ENCODE measurements at regions of chr14 and their contacts with region 1.

Region 1: DNA sequence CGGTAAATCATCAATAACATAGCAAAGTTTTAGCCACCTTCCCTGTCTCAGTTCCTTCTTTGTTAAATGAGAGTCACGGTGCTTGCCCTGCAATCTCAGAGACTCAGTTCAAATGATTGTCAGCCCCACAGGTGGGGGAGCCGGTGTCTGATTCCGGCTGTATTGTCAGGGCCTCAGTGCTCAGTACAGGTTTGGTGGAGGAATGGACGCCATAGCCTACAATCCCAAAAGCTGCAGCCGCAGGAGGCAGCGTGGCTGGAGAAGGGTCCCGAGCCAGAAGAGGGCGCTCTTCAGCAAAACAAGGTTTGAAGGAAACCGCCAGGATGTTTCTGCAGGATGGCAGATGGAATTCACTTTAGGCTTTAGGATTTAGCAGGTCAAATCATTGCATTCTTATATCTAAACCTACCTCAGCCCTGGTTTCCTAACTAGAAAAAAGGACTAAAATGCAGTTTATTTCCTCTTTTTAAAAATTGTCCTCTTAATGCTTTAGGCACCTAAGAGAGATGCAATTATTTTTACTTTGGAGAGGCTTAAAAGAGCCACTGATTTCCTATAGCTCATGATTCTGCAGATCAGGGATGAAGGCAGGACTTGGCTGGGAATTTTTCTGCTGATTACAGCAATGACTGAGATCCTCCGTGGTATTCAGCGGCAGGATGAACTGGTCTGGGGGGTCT is 29.2 kb downstream of the FOS start:
- DNase-seq: peak; percentile 53
- ATAC-seq: peak; percentile 53
- H3K4me3 Mint-ChIP-seq: no peak overlapping the region
- H3K27ac Mint-ChIP-seq: no peak overlapping the region
- H3K4me1 Mint-ChIP-seq: peaks cover 21% of the 10 kb centered on the region
- H3K27me3 Mint-ChIP-seq: no peaks in the 10 kb centered on the region
- CTCF ChIP-seq: peak; percentile 73

Region 2: GRCh38 chr14:74860906-74861733 is 446.7 kb before region 1 on chr14:
- CTCF ChIA-PET with region 1: interaction called, 4 read pairs
- POLR2A ChIA-PET with region 1: no interaction called
- intact Hi-C with region 1: loop called (anchors 1 kb)
- DNase-seq: peak; percentile 82
- ATAC-seq: peak; percentile 74
- H3K4me3 Mint-ChIP-seq: no peak overlapping the region
- H3K27ac Mint-ChIP-seq: no peak overlapping the region
- H3K4me1 Mint-ChIP-seq: peaks cover 6% of the 10 kb centered on the region
- H3K27me3 Mint-ChIP-seq: no peaks in the 10 kb centered on the region
- CTCF ChIP-seq: no peak

Region 3: DNA sequence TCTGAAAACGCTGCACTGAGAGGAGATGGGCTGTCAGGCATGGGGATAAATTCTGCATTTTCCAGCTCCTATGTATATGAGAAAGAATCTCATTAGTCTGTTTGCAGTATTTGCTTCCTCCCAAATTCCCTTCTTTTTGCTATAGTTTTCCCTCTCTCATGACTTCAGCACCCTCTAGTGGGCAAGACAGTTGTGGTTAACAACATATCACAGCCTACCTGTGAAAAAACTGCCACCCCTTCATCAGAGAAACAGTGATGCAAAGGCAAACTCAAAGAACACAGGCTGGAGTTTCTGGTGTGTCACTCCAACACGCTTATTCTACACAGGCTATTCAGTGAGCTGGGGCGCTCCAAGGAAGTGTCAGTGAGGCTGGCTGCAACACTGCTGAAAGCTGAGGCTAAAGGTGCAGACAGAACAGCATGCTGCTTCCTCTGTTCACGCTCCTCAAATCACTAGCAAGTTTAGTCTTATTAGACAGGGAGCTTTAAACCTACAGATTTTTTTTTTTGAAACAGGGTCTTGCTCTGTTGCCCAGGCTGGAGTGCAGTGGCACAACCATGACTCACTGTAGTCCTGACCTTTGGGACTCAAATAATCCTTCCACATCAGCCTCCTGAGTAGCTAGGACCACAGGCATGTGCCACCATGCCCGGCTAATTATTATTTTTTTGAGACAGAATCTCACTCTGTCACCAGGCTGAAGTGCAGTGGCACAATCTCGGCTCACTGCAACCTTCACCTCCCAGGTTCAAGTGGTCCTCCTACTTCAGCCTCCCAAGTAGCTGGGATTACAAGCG is 219.1 kb before region 1 on chr14:
- CTCF ChIA-PET with region 1: no interaction called
- POLR2A ChIA-PET with region 1: no interaction called
- intact Hi-C with region 1: loop called (anchors 1 kb)
- DNase-seq: no peak
- ATAC-seq: peak; percentile 37
- H3K4me3 Mint-ChIP-seq: no peak overlapping the region
- H3K27ac Mint-ChIP-seq: no peak overlapping the region
- H3K4me1 Mint-ChIP-seq: no peaks in the 10 kb centered on the region
- H3K27me3 Mint-ChIP-seq: no peaks in the 10 kb centered on the region
- CTCF ChIP-seq: peak; percentile 72

Region 4: GRCh38 chr14:75138492-75138891 is 169.3 kb before region 1 on chr14:
- CTCF ChIA-PET with region 1: interaction called, 47 read pairs
- POLR2A ChIA-PET with region 1: no interaction called
- intact Hi-C with region 1: no loop called
- DNase-seq: no peak
- ATAC-seq: peak; percentile 72
- H3K4me3 Mint-ChIP-seq: peak overlapping the region; percentile 55
- H3K27ac Mint-ChIP-seq: peak overlapping the region; percentile 76
- H3K4me1 Mint-ChIP-seq: peaks cover 51% of the 10 kb centered on the region
- H3K27me3 Mint-ChIP-seq: no peaks in the 10 kb centered on the region
- CTCF ChIP-seq: no peak

Region 5: DNA sequence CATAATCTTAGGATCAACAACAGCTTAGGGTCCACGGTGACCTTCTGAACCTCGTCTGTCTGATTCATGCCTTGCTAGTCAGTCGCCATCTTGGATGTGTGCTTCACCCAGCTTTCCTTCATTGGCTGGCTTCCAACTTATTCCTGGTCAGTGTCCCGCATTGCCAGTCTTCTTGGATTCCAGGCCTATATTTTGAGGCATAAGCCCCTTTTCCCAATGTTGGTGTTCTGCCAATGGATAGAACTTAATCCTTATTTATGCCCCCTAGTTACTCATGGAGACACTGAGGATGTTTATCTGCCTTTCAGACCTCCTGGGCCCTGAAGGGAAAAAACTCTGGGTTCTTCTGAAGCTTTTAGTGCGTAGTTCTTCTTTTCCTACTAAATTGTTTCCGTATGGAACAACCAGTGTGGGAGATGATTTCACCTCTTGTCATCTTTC is 125.8 kb after region 1 on chr14:
- CTCF ChIA-PET with region 1: no interaction called
- POLR2A ChIA-PET with region 1: no interaction called
- intact Hi-C with region 1: no loop called
- DNase-seq: no peak
- ATAC-seq: no peak
- H3K4me3 Mint-ChIP-seq: no peak overlapping the region
- H3K27ac Mint-ChIP-seq: no peak overlapping the region
- H3K4me1 Mint-ChIP-seq: peaks cover 47% of the 10 kb centered on the region
- H3K27me3 Mint-ChIP-seq: no peaks in the 10 kb centered on the region
- CTCF ChIP-seq: no peak

Region 6: GRCh38 chr14:75452900-75453747 is 145.3 kb after region 1 on chr14:
- CTCF ChIA-PET with region 1: interaction called, 10 read pairs
- POLR2A ChIA-PET with region 1: interaction called, 11 read pairs
- intact Hi-C with region 1: loop called (anchors 1 kb)
- DNase-seq: no peak
- ATAC-seq: no peak
- H3K4me3 Mint-ChIP-seq: no peak overlapping the region
- H3K27ac Mint-ChIP-seq: no peak overlapping the region
- H3K4me1 Mint-ChIP-seq: peaks cover 4% of the 10 kb centered on the region
- H3K27me3 Mint-ChIP-seq: no peaks in the 10 kb centered on the region
- CTCF ChIP-seq: no peak

Region 7: GRCh38 chr14:75560962-75561432 is 253.2 kb after region 1 on chr14:
- CTCF ChIA-PET with region 1: interaction called, 22 read pairs
- POLR2A ChIA-PET with region 1: no interaction called
- intact Hi-C with region 1: loop called (anchors 1 kb)
- DNase-seq: no peak
- ATAC-seq: peak; percentile 46
- H3K4me3 Mint-ChIP-seq: peak overlapping the region; percentile 42
- H3K27ac Mint-ChIP-seq: peak overlapping the region; percentile 41
- H3K4me1 Mint-ChIP-seq: peaks cover 37% of the 10 kb centered on the region
- H3K27me3 Mint-ChIP-seq: no peaks in the 10 kb centered on the region
- CTCF ChIP-seq: peak; percentile 40

Region 8: DNA sequence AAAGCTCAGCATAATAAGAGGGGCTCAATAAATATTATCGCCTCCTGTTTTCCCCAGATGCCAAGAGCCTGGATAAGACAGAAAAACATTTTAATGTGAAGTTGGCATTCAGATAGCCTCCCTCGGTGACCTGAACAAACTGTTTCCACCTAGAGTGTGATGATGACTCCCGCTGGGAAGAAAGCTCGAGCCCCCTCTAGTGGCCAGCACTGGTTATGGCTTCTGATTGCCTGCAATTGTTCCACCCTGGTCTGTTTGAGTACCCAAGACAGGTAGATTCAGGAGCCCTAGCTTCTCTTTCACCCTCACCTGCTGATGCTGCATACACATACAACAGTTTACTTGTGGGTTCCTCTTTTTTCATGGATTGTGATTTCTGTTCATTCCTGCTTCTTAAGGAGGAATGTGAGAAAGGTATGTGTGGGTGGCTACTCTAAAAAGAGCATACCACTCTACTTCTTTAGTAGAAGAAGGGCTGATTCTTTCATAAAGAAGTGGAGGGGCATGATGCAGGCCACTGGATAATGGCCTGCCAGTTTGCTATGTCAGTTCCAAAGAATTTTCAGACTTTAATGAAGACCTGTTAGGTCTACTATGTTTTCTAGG is 346.4 kb after region 1 on chr14:
- CTCF ChIA-PET with region 1: interaction called, 16 read pairs
- POLR2A ChIA-PET with region 1: no interaction called
- intact Hi-C with region 1: loop called (anchors 1 kb)
- DNase-seq: peak; percentile 72
- ATAC-seq: peak; percentile 96
- H3K4me3 Mint-ChIP-seq: no peak overlapping the region
- H3K27ac Mint-ChIP-seq: no peak overlapping the region
- H3K4me1 Mint-ChIP-seq: peaks cover 1% of the 10 kb centered on the region
- H3K27me3 Mint-ChIP-seq: no peaks in the 10 kb centered on the region
- CTCF ChIP-seq: peak; percentile 87